ENCODE measurements at regions of chr9 and their contacts with region 1.

Region 1: GRCh38 chr9:15901572-15901971 is 348.7 kb downstream of the CCDC171 start:
- DNase-seq: no peak
- H3K4me3 ChIP-seq: no peak overlapping the region
- H3K27me3 ChIP-seq: 0 out of 2 replicates have a peak, but pooled peaks cover 1% of the 10 kb centered on the region
- CTCF ChIP-seq: no peak

Region 2: DNA sequence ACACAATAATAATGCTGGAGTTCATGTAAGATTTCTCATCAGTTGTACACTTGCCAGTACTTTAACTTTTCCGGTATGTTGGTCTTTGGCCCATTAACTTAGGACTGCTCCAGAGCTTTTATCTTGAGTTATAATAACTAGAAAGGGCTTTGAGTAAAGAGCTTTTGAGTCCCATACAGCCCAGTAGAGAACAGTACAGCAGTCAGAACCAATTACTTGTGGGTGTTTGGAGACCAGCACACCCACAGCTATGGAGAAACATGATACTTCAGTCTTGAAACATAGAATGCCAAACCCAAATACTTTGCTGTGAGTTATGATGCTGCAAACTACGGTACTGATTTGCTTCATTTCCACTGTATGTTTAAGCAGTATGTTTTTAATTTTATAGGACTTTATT is 25.6 kb after region 1 on chr9:
- CTCF ChIA-PET with region 1: no interaction called
- POLR2A ChIA-PET with region 1: interaction called, 14 read pairs
- DNase-seq: no peak
- H3K4me3 ChIP-seq: no peak overlapping the region
- H3K27me3 ChIP-seq: no peaks in the 10 kb centered on the region
- CTCF ChIP-seq: no peak

Region 3: DNA sequence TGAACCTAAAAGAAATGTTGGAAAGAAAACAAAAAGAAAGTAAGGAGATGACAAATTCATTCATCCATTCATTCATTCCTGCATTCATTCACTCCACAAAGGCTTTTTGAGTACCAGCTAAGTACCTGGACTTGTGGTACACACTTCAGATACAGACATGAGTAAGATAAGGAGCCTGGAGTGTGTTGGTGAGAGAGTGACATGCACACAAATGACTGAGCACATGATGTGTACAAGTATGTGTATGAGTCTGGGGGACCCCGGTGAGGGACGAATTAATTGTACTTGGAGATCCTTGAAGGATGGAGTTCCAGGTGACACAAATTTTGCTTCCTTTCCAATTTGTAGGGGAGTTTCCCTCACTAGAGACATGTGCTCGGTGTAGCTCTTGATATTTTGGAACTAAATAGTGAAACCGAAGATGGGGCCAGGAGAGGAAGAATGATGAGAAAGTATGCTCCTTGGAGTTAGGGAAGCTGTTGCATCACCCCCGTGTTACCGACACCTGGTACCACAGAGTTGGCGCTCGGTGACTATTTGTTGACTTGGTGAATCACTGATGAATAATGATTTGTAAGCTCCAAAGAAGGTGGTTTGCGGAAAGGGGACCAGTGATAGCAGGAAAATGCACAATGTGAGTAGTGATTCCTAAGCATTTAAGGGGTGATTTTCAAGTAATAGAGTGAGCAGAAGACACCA is 161.1 kb after region 1 on chr9:
- CTCF ChIA-PET with region 1: no interaction called
- POLR2A ChIA-PET with region 1: no interaction called
- DNase-seq: peak; percentile 37
- H3K4me3 ChIP-seq: no peak overlapping the region
- H3K27me3 ChIP-seq: no peaks in the 10 kb centered on the region
- CTCF ChIP-seq: no peak

Measured in BJ (cell line).